ENCODE measurements at regions of chr20 and their contacts with region 1.

Region 1: DNA sequence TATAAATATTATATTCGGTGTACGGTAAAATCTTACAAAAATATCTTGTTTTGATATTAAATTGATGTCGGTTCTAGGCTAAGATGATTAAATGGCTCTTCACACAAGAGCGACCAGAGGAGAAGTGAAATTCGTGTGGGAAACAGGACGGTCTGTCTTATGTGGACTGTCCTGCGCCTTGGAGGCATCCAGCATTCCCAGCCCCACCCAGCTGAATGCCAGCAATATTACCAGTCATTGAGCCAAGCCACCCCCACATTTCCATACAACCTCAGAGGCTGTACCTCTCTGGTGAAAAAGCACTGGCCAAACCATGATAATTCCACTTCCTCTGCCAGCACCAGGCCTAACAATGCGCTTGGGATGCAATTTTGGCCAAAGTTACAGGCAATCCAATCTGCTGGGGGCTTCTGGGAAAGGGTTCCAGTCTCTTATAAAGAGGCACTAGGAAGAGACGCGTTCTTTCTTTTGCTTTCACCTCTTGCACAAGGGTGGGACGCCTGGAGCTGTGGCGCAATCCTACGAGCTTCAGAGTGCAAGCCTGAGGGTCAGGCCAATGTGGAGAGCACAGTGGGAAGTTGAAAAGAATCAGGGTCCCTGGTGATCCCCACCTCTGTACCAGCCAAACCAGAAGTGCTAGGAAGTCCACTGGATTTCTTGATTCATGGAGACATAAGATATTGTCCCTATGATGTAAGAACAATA is 213.1 kb downstream of the PREX1 start:
- DNase-seq: peak; percentile 33
- ATAC-seq: no peak

Region 2: GRCh38 chr20:47481770-47482169 is 1133.0 kb before region 1 on chr20:
- intact Hi-C with region 1: loop called (anchors 5 kb)
- DNase-seq: no peak
- ATAC-seq: no peak

Measured in sciatic nerve (tissue), 2 donors.